Activated CD4-positive, alpha-beta T cell treated with anti-CD3 and anti-CD28 coated beads, Interleukin-2, amount 10 ng/mL, durations not matched to agents 24 days and 14 days (primary cell): ENCODE measurements at regions of chr18 and their contacts with region 1.

Region 1: DNA sequence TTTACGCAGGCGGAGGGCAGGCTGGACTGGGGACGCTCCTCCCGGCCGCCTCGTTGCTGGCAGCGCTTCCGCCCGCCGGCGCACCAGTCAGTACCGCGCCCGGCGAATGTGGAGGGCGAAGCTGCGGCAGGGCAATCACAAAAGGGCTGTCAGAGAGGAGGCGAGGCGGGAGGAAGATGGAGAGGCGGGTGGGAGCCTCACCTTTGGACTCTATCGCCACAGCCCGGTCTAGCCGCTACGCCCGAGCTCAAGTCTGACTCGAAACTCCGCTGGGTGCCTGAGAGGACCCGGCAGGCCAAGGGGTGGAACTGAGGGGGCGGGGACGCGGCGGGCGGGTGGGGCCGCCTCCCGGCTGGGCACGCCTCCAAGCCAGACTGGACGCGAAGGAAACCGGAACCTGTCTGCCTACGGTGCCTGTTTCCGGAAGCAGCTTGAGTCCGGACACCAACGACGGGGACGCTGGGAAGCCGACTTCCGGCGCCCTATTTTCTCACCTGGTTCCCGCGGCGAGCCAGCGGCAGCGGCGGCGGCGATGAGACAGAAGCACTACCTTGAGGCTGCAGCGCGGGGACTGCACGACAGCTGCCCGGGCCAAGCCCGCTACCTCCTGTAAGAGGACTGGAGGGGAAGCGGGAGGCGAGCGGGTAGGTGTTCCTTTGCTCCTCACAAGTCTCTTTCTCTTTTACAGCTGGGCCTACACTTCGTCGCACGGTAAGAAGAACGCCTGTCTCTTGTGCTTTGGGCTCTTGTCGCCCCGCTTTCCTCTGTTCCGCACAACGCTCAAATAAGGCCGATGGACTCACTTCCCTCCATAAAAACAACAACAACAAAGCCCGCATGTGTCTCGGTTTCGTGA is at the start of gene RMP24:
- DNase-seq: peak; percentile 97
- H3K4me3 Mint-ChIP-seq: peak within 1 kb of the TSS; percentile 99
- H3K27ac Mint-ChIP-seq: peak within 1 kb of the TSS; percentile 92
- H3K4me1 Mint-ChIP-seq: peaks cover 43% of the 10 kb centered on the region
- H3K27me3 Mint-ChIP-seq: no peaks in the 10 kb centered on the region

Region 2: GRCh38 chr18:34867520-34867919 is 1104.9 kb before region 1 on chr18:
- intact Hi-C with region 1: loop called (anchors 5 kb)
- DNase-seq: no peak
- H3K4me3 Mint-ChIP-seq: no peak overlapping the region
- H3K27ac Mint-ChIP-seq: peak overlapping the region; percentile 26
- H3K4me1 Mint-ChIP-seq: peaks cover 26% of the 10 kb centered on the region
- H3K27me3 Mint-ChIP-seq: peaks cover 6% of the 10 kb centered on the region

Region 3: GRCh38 chr18:35343936-35344735 is 628.3 kb before region 1 on chr18 and contains the start of gene ZNF24:
- intact Hi-C with region 1: loop called (anchors 1 kb)
- DNase-seq: peak; percentile 98
- H3K4me3 Mint-ChIP-seq: peak within 1 kb of the TSS; percentile 100
- H3K27ac Mint-ChIP-seq: peak within 1 kb of the TSS; percentile 94
- H3K4me1 Mint-ChIP-seq: peaks cover 33% of the 10 kb centered on the region
- H3K27me3 Mint-ChIP-seq: peaks cover 1% of the 10 kb centered on the region
- total RNA-seq, gene ZNF24: 53.9 and 57.8 TPM in 2 replicates

Region 4: DNA sequence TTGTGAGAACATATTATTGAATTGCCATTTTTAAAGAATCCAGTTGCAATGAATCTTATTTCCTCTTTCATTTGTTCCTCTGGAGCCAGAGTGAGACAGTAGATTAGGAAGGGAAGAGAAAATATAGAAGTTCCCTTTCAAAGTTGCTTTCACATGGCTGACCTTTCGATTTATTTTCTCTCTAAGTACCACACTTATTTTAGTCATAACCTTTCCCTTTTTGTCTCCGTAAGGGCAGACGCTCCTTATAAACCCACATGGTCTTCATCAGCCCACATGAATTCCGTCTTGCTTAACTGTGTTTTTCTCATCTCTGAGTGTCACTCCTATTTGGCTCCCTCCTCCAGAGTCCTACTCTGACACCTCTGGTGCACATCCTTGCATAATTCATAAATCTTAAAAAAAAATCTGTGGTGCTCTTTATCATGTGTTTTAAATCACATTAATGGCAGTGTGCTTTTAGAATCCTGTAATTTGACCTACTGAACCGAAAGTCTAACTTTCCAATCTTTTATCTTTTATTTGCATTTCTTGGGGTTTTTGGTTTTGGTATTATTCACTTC is 556.8 kb before region 1 on chr18:
- intact Hi-C with region 1: loop called (anchors 2 kb)
- DNase-seq: no peak
- H3K4me3 Mint-ChIP-seq: peak overlapping the region; percentile 14
- H3K27ac Mint-ChIP-seq: peak overlapping the region; percentile 6
- H3K4me1 Mint-ChIP-seq: peaks cover 22% of the 10 kb centered on the region
- H3K27me3 Mint-ChIP-seq: no peaks in the 10 kb centered on the region

Region 5: DNA sequence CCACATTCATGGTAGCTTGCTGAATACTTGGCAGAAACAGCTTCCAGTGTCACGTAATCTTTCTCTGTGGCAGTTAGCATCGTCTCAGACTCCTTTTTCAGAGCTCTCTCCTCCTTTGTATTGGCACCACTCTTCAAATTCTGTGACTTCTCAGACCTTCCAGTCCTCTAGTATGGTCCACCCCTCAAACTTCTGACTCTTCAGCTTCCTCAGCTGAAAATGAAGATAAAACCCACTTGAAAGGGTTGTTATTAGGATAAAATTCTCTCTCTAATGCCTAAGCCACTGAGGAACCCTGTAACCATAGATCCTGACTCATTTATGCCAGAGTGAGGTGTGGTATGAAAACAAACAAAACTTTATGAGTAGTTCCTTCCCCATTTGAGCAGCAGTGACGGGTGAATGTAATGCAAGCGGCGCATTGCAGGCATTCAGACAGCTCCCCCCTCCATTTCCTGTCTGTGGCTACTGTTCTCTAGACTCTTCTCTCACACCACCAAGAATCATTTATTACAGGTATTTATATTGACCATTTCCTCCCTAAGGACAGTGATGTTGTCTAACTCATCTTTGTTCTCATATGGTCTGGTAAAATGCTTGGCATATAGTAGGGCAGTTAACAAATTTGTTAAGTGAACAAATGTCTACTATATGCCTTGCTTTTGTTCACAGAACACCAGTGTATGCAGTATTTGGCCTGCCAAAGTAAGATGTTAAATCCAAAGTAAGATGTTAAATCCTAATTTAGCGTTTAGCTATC is 355.6 kb before region 1 on chr18:
- intact Hi-C with region 1: loop called (anchors 5 kb)
- DNase-seq: peak; percentile 85
- H3K4me3 Mint-ChIP-seq: no peak overlapping the region
- H3K27ac Mint-ChIP-seq: no peak overlapping the region
- H3K4me1 Mint-ChIP-seq: peaks cover 2% of the 10 kb centered on the region
- H3K27me3 Mint-ChIP-seq: no peaks in the 10 kb centered on the region

Region 6: GRCh38 chr18:35983818-35984217 is 11.4 kb after region 1 on chr18:
- intact Hi-C with region 1: no loop called
- DNase-seq: no peak
- H3K4me3 Mint-ChIP-seq: no peak overlapping the region
- H3K27ac Mint-ChIP-seq: no peak overlapping the region
- H3K4me1 Mint-ChIP-seq: no peaks in the 10 kb centered on the region
- H3K27me3 Mint-ChIP-seq: no peaks in the 10 kb centered on the region

Region 7: GRCh38 chr18:36129300-36130038 is 157.0 kb after region 1 on chr18 and contains the starts of genes ELP2 and SLC39A6:
- intact Hi-C with region 1: loop called (anchors 1 kb)
- DNase-seq: peak; percentile 99
- H3K4me3 Mint-ChIP-seq: peak within 1 kb of the TSS; percentile 94
- H3K27ac Mint-ChIP-seq: peak within 1 kb of the TSS; percentile 96
- H3K4me1 Mint-ChIP-seq: peaks cover 50% of the 10 kb centered on the region
- H3K27me3 Mint-ChIP-seq: no peaks in the 10 kb centered on the region
- total RNA-seq, gene ELP2: 104 and 111 TPM in 2 replicates
- total RNA-seq, gene SLC39A6: 51.2 and 51.5 TPM in 2 replicates